HEK293 (cell line): ENCODE measurements at regions of chr12 and their contacts with region 1.

Region 1: GRCh38 chr12:54214553-54215406 is 26.0 kb upstream of the SMUG1 start:
- H3K4me3 ChIP-seq: peak overlapping the region; percentile 19
- H3K27ac ChIP-seq: no peak overlapping the region
- H3K4me1 ChIP-seq: no peaks in the 10 kb centered on the region
- CTCF ChIP-seq: peak; percentile 99

Region 2: DNA sequence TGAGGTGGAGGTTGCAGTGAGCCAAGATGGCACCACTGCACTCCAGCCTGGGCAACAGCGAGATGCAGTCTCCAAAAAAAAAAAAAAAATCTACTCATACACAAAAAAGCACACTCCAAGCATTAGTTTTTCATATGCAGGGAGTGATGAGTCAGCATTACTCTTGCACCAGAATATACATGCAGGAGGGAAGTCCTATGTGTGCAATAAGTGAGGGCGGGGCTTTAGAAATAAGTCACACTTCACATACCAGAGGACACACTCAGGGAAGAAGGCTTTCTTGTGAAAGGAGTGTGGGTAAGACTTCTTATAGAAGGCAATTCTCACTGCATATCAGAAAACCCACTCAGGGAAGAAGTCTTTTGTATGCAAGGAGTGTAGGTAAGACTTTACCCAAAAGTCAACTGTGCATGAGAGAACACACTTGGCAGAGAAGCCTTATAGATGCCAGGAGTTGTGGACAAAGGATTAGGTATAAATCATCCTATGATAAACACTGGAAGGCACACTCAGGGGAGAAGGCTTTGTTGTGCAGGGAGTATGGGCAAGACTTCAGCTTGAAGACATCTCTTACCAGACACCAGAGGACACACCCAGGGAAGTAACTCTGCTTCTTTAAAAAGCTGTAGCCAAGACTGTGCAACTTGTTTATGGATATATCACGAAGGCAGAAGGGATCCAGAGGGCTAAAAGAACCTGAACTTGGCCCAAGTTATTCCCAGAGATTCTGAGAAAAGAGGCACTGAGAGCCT is 639.1 kb before region 1 on chr12:
- CTCF ChIA-PET with region 1: no interaction called
- POLR2A ChIA-PET with region 1: no interaction called
- H3K4me3 ChIP-seq: no peak overlapping the region
- H3K27ac ChIP-seq: peak overlapping the region; percentile 17; the same call in 1 of the 2 replicates
- H3K4me1 ChIP-seq: no peaks in the 10 kb centered on the region
- CTCF ChIP-seq: no peak

Region 3: DNA sequence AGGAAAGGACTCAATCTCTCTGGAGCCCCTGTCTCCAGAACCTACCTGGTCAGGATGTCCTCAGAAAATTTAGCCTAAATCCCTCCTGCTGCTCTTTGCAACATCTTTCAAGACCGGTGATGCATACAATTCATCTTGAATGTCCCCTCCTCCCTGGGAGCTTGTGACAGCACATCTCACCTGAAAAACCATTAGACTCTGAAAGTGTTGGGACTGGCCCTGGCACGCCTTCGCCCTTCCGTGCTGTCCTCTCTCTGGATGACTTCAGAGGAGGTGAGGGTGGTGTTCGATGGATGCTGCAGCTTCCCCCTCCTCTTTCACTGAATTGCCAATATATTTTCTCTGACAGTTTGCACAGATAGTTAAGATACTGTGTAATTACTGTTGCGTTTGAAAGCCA is 372.1 kb before region 1 on chr12:
- CTCF ChIA-PET with region 1: no interaction called
- POLR2A ChIA-PET with region 1: no interaction called
- H3K4me3 ChIP-seq: no peak overlapping the region
- H3K27ac ChIP-seq: no peak overlapping the region
- H3K4me1 ChIP-seq: no peaks in the 10 kb centered on the region
- CTCF ChIP-seq: no peak

Region 4: GRCh38 chr12:53995378-53996239 is 219.2 kb before region 1 on chr12:
- CTCF ChIA-PET with region 1: interaction called, 49 read pairs
- POLR2A ChIA-PET with region 1: interaction called, 3 read pairs
- H3K4me3 ChIP-seq: peak overlapping the region; percentile 61
- H3K27ac ChIP-seq: peak overlapping the region; percentile 98
- H3K4me1 ChIP-seq: peaks cover 32% of the 10 kb centered on the region
- CTCF ChIP-seq: no peak

Region 5: DNA sequence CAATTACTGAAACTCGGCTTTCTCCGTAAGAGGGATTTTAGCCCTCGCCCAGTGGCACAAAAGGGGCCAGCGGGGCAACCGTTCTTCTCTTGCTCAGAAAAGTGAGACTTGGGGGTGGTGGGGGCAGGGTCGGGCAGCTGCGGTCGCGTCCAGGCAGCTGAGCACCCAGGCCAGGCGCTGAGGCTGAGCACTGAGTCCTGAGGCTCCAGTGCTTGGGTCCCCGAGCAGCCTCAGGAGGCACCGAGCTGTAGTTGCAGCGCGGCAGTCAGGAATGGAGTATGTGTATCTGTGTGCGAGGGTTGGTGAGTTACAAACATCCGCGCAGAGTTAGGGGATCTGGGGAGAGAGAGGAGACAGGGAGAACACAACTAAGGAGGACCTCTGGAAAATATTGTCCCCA is 190.7 kb before region 1 on chr12:
- CTCF ChIA-PET with region 1: interaction called, 21 read pairs
- POLR2A ChIA-PET with region 1: no interaction called
- H3K4me3 ChIP-seq: no peak overlapping the region
- H3K27ac ChIP-seq: no peak overlapping the region; the same call in 1 of the 2 replicates
- H3K4me1 ChIP-seq: peaks cover 78% of the 10 kb centered on the region
- CTCF ChIP-seq: no peak

Region 6: DNA sequence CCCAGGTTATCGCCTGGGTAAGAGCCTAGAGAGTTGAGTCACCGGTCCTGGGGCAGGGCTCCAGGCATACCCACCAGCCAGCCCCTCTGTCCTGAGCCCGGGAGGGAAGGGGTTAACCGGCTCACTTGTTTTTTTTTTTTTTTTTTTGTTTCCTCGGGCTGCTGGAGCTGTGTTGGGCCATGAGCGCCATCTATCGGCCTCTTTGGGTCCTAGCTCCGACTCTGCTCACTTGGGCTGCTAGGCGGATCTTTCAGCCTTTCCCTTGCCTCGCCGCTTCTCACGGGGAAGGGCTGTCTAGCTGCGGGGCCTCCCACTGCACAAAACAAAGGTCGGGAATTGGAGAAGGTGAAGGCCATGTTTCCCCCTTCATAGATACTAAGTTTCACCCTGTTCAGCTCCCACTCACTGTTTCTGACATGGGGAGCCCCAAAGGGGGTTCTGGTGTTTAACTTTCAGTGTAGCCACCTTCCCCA is 23.2 kb before region 1 on chr12:
- CTCF ChIA-PET with region 1: interaction called, 86 read pairs
- POLR2A ChIA-PET with region 1: interaction called, 3 read pairs
- H3K4me3 ChIP-seq: no peak overlapping the region
- H3K27ac ChIP-seq: peak overlapping the region; percentile 43; the same call in 1 of the 2 replicates
- H3K4me1 ChIP-seq: peaks cover 14% of the 10 kb centered on the region
- CTCF ChIP-seq: peak; percentile 97

Region 7: DNA sequence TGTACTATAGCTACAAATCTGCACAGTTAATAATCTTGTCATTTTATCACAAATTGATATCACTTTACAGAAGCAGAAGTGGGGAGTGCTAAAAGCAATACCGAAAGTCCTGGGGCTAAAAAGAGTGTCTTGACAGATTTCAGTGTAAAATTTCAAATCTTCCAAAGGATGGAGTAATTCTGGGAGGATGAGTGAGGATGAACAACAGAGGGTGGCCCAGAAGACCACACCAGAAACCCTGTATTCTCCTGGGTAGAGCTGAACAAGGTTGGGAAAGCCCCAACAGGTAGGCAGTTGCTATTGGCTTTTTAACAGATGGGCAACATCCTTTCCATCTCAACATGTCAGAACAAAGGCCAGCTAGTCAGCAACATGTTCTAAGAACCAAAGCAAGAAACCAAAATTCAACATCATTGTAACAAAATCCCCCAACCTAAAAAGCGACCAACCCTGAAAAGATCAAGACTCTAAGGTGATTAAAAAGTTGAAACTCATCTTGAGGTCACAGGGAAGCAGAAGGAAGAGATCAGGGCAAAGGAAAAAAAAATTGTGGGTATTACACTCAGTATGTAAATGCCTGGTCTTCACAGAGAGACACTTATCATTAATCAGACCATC is 26.3 kb after region 1 on chr12:
- CTCF ChIA-PET with region 1: interaction called, 10 read pairs
- POLR2A ChIA-PET with region 1: no interaction called
- H3K4me3 ChIP-seq: no peak overlapping the region
- H3K27ac ChIP-seq: no peak overlapping the region
- H3K4me1 ChIP-seq: no peaks in the 10 kb centered on the region
- CTCF ChIP-seq: no peak

Region 8: GRCh38 chr12:54359033-54359761 is 144.4 kb after region 1 on chr12:
- CTCF ChIA-PET with region 1: interaction called, 70 read pairs
- POLR2A ChIA-PET with region 1: interaction called, 4 read pairs
- H3K4me3 ChIP-seq: peak overlapping the region; percentile 62
- H3K27ac ChIP-seq: peak overlapping the region; percentile 80
- H3K4me1 ChIP-seq: peaks cover 12% of the 10 kb centered on the region
- CTCF ChIP-seq: no peak